ENCODE measurements at regions of chr17 and their contacts with region 1.

Region 1: DNA sequence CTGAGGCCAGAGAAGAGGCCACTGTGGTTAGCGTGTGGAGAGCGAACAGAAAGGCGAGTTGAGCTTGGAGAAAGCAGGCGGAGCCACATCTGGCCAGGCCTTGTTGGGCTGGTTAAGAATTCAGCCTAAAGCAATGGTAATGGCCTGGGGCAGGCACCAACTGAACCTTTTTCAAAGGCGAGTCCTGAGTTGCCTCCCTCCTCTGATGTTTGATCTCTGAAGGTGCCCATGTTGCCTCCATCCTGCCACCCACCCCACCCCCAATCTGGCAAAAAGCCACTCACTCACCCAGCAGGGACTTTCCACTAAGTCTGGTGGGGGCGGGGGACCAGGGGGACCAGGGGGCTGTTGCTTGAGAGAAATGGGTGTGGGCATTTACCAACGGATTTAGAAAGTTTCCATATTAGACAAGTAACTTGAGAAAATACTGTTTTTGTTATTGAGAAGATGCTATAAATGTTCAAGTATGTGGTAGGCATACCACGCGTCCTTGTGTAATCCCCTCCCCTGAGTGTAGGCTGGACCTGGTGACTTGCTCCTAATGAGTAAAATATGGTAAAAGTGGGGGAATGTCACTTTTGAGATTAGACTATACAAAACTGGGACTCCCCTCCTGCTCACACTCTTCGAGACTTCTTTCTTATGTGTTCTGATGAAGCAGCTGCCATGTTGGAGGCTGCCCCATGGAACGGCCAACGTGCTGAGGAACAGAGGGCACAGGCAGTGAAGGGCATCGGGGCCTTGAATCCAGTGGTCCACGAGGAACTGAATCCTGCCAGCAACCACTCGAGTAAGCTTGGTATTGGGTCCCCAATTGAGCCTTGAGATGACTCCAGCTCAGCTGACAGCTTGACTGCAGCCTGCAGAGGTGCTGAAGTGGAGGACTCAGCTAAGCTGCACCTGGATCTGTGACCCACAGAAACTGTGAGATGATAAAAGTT is 29.9 kb upstream of the TNS4 start:
- DNase-seq: peak; percentile 48
- H3K4me3 Mint-ChIP-seq: peak overlapping the region; percentile 82
- H3K27ac Mint-ChIP-seq: peak overlapping the region; percentile 93
- H3K4me1 Mint-ChIP-seq: peaks cover 82% of the 10 kb centered on the region
- H3K27me3 Mint-ChIP-seq: no peaks in the 10 kb centered on the region

Region 2: DNA sequence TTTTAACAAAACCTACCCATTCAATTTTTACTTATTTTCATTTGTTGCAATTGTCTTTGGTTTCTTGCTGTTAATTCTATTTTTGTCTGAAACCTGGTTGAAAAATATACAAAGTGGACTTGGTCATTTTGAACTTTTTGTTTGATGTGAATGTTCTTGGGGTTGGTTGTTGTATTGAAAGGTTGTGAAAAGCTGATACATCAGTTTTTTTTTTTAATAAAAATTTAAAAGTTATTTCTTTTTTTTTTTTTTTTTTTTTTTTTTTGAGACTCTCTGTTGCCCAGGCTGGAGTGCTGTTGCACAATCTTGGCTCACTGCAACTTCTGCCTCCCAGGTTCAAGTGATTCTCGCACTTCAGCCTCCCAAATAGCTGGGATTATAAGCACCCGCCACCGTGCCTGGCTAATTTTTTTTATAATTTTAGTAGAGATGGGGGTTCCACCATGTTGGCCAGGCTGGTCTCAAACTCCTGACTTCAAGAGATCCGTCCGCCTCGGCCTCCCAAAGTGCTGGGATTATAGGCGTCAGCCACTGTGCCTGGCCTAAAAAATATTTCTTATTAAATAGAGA is 283.3 kb before region 1 on chr17:
- intact Hi-C with region 1: no loop called
- DNase-seq: no peak
- H3K4me3 Mint-ChIP-seq: no peak overlapping the region
- H3K27ac Mint-ChIP-seq: no peak overlapping the region
- H3K4me1 Mint-ChIP-seq: peaks cover 11% of the 10 kb centered on the region
- H3K27me3 Mint-ChIP-seq: no peaks in the 10 kb centered on the region

Region 3: GRCh38 chr17:40399185-40399584 is 132.1 kb before region 1 on chr17:
- intact Hi-C with region 1: loop called (anchors 1 kb)
- DNase-seq: no peak
- H3K4me3 Mint-ChIP-seq: no peak overlapping the region
- H3K27ac Mint-ChIP-seq: no peak overlapping the region
- H3K4me1 Mint-ChIP-seq: peaks cover 42% of the 10 kb centered on the region
- H3K27me3 Mint-ChIP-seq: no peaks in the 10 kb centered on the region

Region 4: DNA sequence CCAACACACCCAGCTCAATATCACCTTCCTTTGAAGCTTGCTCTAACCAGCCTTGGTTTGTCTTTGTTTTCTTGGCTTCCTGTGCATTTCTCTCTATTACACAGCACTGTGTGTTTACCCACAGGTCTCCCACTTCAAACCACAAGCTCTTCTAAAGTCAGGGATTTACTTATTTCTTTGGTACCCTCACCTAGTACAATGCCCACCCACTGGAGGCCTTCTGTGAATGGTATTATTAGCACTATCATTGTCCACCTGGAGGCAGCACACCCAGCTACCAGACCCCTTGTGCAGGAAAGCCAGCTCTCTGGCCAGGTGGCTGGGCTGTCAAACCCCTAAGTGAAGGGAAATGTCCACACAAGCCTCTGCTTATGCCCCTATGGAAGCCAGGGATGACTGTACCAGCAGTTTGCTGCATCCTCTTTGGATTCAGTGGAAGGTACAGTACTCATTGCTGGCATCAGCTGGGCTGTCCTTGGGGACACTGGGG is 104.3 kb before region 1 on chr17:
- intact Hi-C with region 1: loop called (anchors 1 kb)
- DNase-seq: no peak
- H3K4me3 Mint-ChIP-seq: peak overlapping the region; percentile 12
- H3K27ac Mint-ChIP-seq: peak overlapping the region; percentile 14
- H3K4me1 Mint-ChIP-seq: peaks cover 35% of the 10 kb centered on the region
- H3K27me3 Mint-ChIP-seq: peaks cover 37% of the 10 kb centered on the region

Region 5: DNA sequence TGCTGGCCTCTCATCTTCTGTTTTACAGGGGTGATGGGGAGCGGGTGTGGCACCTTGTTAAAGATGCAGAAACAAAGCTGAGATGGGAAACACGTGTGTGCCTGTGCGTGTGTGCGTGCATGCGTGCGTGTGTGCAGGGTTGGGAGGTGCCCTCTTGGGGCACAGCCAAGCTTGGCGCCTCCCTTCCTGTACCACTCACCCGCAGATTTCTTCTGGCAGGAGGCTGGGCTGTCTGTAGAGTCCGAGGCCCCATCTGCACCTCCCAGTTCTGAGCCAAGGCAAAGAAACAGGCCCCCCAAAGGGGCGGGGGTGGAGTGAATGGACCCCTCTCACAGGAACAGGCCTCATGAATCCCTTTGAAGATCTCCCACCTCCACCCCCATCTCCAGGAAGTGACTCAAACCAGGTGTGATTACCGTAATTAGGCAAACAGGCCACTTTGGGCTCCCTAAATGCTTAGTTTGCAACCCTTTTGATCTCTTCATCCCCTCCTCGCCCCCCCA is 50.8 kb before region 1 on chr17:
- intact Hi-C with region 1: loop called (anchors 1 kb)
- DNase-seq: peak; percentile 76
- H3K4me3 Mint-ChIP-seq: peak overlapping the region; percentile 84
- H3K27ac Mint-ChIP-seq: peak overlapping the region; percentile 99
- H3K4me1 Mint-ChIP-seq: peaks cover 84% of the 10 kb centered on the region
- H3K27me3 Mint-ChIP-seq: no peaks in the 10 kb centered on the region

Region 6: DNA sequence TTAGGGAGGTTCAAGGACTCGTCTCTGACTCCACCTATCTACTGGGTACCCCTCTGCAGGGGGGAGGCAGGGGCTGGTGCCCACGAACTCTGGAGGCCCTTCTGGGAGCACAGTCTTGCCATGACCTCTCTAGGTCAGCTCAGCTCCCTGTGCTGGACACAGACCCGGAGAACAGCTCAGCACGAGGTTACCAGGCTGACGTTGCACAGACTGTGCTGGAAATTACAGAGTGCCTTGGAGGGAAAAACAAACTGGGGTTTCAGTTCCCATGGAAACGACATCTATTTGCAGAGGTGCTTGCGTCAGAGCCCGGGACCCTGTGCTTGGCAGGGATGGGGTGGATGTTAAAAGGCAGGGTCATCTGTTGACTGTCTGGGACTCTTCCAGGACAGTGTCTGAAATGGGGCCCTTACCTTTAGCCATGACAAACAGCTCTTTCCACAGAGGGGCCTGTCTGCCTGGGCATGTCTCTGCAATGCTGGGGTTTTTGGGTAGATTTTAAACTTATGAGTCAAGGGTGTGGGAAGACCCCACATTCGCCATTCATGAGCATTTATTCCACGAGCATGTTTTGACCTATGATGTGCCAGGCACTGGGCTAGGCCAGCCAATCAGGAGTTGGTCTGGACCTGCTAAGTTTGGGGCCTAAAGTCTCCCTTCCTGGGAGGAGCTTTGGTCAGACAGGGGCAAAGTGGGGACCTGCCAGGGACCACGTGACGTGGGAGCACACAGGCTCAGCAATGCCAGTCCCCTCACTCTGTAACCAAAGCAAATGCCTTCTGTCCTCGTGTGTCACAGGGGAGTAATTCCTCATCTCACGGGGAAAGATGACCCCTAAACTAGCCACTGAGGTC is 11.5 kb after region 1 on chr17:
- intact Hi-C with region 1: loop called (anchors 1 kb)
- DNase-seq: no peak
- H3K4me3 Mint-ChIP-seq: peak overlapping the region; percentile 69
- H3K27ac Mint-ChIP-seq: peak overlapping the region; percentile 88
- H3K4me1 Mint-ChIP-seq: peaks cover 75% of the 10 kb centered on the region
- H3K27me3 Mint-ChIP-seq: peaks cover 10% of the 10 kb centered on the region